ENCODE measurements at regions of chr2 and their contacts with region 1.

Region 1: DNA sequence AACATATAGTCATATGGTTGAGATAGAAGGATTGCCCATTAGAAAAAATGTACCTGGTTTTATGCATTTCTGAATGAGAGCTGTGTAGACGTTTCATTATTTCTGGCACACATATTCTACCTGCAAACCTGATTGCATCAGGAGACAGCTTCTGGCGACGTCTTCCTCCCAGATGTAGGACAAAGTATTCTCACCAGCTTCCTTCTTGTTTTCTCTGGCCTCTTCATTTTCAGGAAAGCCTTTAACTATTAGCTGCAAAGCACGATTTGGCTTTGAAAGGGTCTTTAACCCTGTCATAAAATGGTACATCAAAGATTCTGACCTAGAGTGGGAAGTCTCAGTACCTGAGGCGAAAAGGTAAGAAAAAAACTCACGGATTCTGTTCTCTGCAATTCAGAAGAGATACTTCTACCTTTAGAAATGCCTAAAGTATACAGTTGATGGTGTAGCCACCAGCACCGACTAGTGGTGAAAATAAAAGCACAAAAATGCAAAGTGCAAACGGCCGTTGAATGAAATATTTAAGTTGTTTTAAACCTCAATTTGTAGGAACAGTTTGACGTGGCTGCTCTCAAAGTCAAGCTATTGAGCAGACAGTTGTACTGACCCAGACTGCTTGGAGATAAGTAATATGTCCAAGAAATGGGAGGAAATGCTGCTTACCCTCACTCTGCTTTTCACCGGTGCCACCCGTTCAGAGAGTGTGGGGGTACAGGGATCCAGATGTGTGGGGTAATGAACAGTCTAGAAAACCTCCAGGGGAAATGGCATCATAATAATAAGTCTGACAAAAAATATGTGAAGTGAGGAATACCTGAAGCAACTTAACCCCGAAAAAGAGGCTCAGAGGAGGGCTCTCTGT is 20.2 kb downstream of the IL18RAP start:
- DNase-seq: peak in 3 of 4 experiments; percentile 17 to 65 (median 34)
- ATAC-seq: peak; percentile 85
- H3K4me3 ChIP-seq: no peak overlapping the region
- H3K27ac ChIP-seq: no peak overlapping the region
- H3K4me1 ChIP-seq: peaks cover 9 to 17% of the 10 kb centered on the region in 2 experiments; a peak in 4 of 5 replicates
- H3K27me3 ChIP-seq: no peaks in the 10 kb centered on the region
- CTCF ChIP-seq: peak; percentile 71 to 91 (median 87)
- EP300 ChIP-seq: no peak
- POLR2A ChIP-seq: no peak
- RAD21 ChIP-seq: peak; percentile 89 to 96

Region 2: GRCh38 chr2:102005989-102006885 is 437.0 kb before region 1 on chr2:
- CTCF ChIA-PET with region 1: no interaction called
- POLR2A ChIA-PET with region 1: no interaction called
- in situ Hi-C with region 1: no loop called
- intact Hi-C with region 1: loop called (anchors 5 kb)
- DNase-seq: peak; percentile 66 to 76 (median 68)
- ATAC-seq: peak; percentile 98
- H3K4me3 ChIP-seq: no peak overlapping the region
- H3K27ac ChIP-seq: no peak overlapping the region
- H3K4me1 ChIP-seq: peaks cover 0 to 5% of the 10 kb centered on the region in 2 experiments; a peak in 1 of 5 replicates
- H3K27me3 ChIP-seq: peaks cover 4 to 25% of the 10 kb centered on the region in 2 experiments; a peak in 3 of 5 replicates
- CTCF ChIP-seq: peak; percentile 66 to 86 (median 80)
- EP300 ChIP-seq: no peak
- POLR2A ChIP-seq: no peak
- RAD21 ChIP-seq: peak; percentile 62 to 82

Region 3: DNA sequence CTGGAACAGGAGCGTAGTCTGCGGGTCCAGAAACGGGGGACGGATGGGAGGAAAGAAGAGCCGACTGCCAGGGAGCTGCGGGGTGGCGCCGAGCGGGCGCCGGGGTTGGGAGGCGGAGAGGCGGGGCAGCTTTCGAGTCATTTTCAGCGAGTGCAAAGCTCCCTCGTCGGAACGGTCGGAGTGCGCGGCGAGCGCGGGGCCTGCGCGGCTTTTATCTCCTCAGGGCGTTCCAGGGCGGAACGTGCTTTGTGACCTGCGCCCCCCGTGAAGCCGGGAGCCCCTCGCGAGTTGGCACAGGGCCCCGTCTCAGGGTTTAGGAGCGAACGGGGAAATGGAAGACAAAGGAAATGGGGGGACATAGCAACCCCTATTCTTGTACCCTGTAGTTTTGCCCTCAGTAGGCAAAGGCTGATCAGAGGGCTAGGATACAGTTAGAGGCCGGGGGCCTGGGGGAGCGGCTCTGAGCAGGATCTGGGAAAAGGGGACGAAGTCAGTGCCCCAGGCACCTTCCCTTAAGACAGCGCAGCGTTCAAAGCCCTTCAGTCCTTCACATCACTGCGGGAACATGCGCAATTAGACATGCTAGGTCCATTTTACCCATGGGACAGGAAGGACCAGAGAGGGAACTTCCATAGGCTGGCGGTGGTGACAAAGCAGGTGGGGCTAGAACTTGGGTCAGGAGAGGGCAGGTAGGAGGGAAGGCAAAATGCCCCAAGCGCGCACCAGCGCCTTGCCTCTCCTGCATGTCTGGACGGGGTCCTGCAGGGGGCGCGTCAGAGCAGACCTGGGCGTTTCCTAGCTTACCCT is 192.0 kb before region 1 on chr2:
- CTCF ChIA-PET with region 1: interaction called, 8 read pairs
- POLR2A ChIA-PET with region 1: no interaction called
- in situ Hi-C with region 1: loop called (anchors 5 kb)
- intact Hi-C with region 1: loop called (anchors 5 kb)
- DNase-seq: peak in 2 of 4 experiments; percentile 25 to 34
- ATAC-seq: peak; percentile 63; the same call in 2 of the 3 replicates
- H3K4me3 ChIP-seq: no peak overlapping the region
- H3K27ac ChIP-seq: no peak overlapping the region
- H3K4me1 ChIP-seq: peaks cover 0 to 6% of the 10 kb centered on the region in 2 experiments; a peak in 1 of 5 replicates
- H3K27me3 ChIP-seq: 0 out of 5 replicates have a peak, but pooled peaks cover 0 to 4% of the 10 kb centered on the region in 2 experiments
- CTCF ChIP-seq: peak in 2 of 3 experiments; percentile 40 to 45; a peak in 3 of 6 replicates
- EP300 ChIP-seq: no peak
- POLR2A ChIP-seq: no peak
- RAD21 ChIP-seq: peak in 1 of 2 experiments; percentile 7; a peak in 1 of 4 replicates

Region 4: DNA sequence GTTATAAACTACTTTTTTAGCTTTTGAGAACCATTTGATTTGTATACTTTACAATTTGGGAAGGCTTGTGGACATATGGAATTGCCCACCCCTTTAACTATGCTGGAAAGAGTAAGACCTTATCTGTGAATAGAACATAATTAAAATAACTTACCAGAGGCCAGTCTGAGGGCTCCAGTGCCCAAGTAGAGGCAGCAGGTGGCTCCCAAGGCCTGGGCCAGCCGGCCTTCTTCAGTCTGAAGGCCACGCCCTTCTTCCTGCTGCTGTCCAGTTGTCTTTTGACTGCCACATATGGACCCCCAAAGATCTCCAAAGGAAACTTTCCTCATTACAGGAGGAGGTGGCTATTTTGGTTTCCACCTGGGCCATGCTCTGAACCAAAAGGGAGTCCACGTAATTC is 32.2 kb before region 1 on chr2:
- CTCF ChIA-PET with region 1: interaction called, 4 read pairs
- POLR2A ChIA-PET with region 1: no interaction called
- in situ Hi-C with region 1: no loop called
- intact Hi-C with region 1: loop called (anchors 2 kb)
- DNase-seq: peak in 2 of 4 experiments; percentile 28 to 53
- ATAC-seq: peak; percentile 95
- H3K4me3 ChIP-seq: no peak overlapping the region
- H3K27ac ChIP-seq: no peak overlapping the region
- H3K4me1 ChIP-seq: peaks cover 0 to 8% of the 10 kb centered on the region in 2 experiments; a peak in 2 of 5 replicates
- H3K27me3 ChIP-seq: no peaks in the 10 kb centered on the region
- CTCF ChIP-seq: peak; percentile 61 to 75 (median 62)
- EP300 ChIP-seq: no peak
- POLR2A ChIP-seq: no peak
- RAD21 ChIP-seq: peak; percentile 90 to 94

Region 5: GRCh38 chr2:102422910-102423309 is 20.3 kb before region 1 on chr2 and contains the start of gene IL18RAP:
- CTCF ChIA-PET with region 1: no interaction called
- POLR2A ChIA-PET with region 1: interaction called, 3 read pairs
- in situ Hi-C with region 1: no loop called
- intact Hi-C with region 1: loop called (anchors 2 kb)
- DNase-seq: no peak
- ATAC-seq: no peak
- H3K4me3 ChIP-seq: no peak within 1 kb of the TSS
- H3K27ac ChIP-seq: peak within 1 kb of the TSS; percentile 54; the same call in 2 of the 3 replicates
- H3K4me1 ChIP-seq: peaks cover 21 to 51% of the 10 kb centered on the region in 2 experiments
- H3K27me3 ChIP-seq: no peaks in the 10 kb centered on the region
- CTCF ChIP-seq: no peak
- EP300 ChIP-seq: no peak
- POLR2A ChIP-seq: no peak
- RAD21 ChIP-seq: no peak
- polyA plus RNA-seq, gene IL18RAP: 4.9 to 8.3 TPM

Region 6: GRCh38 chr2:102473020-102473419 is 29.8 kb after region 1 on chr2 and contains the start of gene SLC9A4:
- CTCF ChIA-PET with region 1: no interaction called
- POLR2A ChIA-PET with region 1: no interaction called
- in situ Hi-C with region 1: no loop called
- intact Hi-C with region 1: no loop called
- DNase-seq: peak; percentile 25 to 60 (median 53)
- ATAC-seq: peak; percentile 72
- H3K4me3 ChIP-seq: no peak within 1 kb of the TSS
- H3K27ac ChIP-seq: no peak within 1 kb of the TSS
- H3K4me1 ChIP-seq: no peaks in the 10 kb centered on the region
- H3K27me3 ChIP-seq: peaks cover 0 to 5% of the 10 kb centered on the region in 2 experiments; a peak in 2 of 5 replicates
- CTCF ChIP-seq: peak; percentile 59 to 82 (median 80)
- EP300 ChIP-seq: no peak
- POLR2A ChIP-seq: no peak
- RAD21 ChIP-seq: peak; percentile 68 to 80
- polyA plus RNA-seq, gene SLC9A4: 0.15 TPM in 1 of 2 experiments, not detected in the other